ENCODE measurements at regions of chr5 and their contacts with region 1.

Region 1: GRCh38 chr5:81751009-81751835 is at the start of gene SSBP2:
- DNase-seq: peak; percentile 100
- ATAC-seq: peak; percentile 90 to 95 (median 93)
- H3K4me3 ChIP-seq: peak within 1 kb of the TSS; percentile 86
- H3K27ac ChIP-seq: peak within 1 kb of the TSS; percentile 95
- H3K4me1 ChIP-seq: peaks cover 48% of the 10 kb centered on the region
- H3K27me3 ChIP-seq: no peaks in the 10 kb centered on the region
- CTCF ChIP-seq: no peak
- total RNA-seq, gene SSBP2: 25.3 to 42.6 (median 34.6) TPM

Region 2: DNA sequence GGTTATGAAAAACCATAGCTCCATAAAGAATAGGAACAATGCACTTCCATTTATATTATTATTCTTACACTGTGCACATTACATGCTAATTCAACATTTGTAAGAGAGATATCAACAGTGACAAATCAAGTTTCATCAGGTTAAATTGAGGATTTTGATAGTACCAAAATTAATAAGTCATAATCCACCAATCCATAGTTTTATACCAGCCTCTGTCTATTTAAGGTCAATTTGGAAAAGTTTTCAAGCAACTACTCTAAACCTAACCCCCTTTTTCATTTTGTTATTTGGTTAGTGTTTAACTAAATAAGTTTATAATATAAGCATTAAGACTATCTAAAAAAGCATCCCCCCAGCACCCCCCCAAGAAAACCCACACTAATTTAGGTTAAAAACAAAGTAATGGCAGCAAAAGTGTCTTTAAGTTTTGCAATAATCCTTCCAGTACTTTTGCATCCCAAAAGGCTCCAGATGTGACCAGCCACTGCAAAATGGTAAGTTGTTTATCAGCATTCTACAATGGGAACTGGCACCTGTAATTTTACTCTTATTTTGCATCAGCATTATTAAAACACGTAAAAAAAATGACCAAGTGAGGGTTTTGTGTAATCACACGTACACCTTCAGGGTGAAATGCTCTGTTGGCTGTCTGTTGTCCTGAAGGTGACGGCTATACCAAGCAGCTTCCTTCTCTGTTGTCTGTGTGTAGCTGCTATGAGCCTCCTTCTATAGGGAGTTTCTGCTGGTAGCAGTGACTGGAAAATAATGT is 36.4 kb after region 1 on chr5:
- intact Hi-C with region 1: loop called (anchors 1 to 5 kb)
- DNase-seq: peak in 1 of 2 donors; percentile 31
- ATAC-seq: peak; percentile 40 to 75 (median 46)
- H3K4me3 ChIP-seq: peak overlapping the region; percentile 44
- H3K27ac ChIP-seq: no peak overlapping the region
- H3K4me1 ChIP-seq: peaks cover 22% of the 10 kb centered on the region
- H3K27me3 ChIP-seq: no peaks in the 10 kb centered on the region
- CTCF ChIP-seq: no peak

Region 3: DNA sequence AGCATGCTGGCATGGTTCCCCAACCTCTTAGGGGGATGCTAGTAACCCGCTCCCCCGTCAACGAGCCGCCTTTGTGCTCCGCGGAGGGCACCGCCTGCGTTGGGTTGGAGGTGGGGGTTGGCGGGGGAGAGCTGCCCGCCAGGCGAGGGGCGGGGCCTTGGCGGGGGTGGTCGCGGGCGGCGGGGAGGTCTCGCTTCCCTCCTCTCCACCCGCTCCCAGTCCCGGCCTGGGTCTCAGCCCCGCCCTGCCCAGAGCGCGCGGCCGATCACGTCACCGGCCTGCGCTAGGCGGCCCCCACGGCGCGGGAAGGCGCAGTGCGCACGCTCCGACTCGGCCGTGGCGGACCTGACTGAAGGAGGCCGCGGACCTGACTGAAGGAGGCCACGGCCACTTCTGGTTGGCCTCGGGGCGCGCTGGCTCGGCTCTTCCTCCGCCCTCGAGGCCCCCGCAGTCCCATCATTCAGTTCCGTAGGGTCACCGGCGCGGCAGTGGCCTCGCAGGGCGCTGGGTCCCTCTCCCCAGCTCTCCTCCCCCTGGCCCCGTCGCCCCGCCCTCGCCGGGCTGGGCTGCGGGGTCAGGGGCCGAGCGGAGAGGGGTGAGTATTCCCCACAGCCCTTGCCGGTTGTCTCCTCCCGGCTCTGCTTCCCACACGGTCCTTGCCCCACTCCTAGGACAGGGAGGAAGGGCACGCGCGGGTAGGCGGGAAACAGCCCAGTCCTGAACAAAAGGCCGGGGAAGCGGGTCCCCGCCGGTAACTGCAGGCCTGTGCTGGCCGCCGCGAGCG is 220.7 kb after region 1 on chr5 and contains the start of gene ATG10:
- intact Hi-C with region 1: loop called (anchors 2 to 10 kb)
- DNase-seq: peak; percentile 92 to 95
- ATAC-seq: peak; percentile 97 to 99 (median 98)
- H3K4me3 ChIP-seq: peak within 1 kb of the TSS; percentile 80
- H3K27ac ChIP-seq: peak within 1 kb of the TSS; percentile 97
- H3K4me1 ChIP-seq: no peaks in the 10 kb centered on the region
- H3K27me3 ChIP-seq: no peaks in the 10 kb centered on the region
- CTCF ChIP-seq: no peak
- total RNA-seq, gene ATG10: 4.6 to 7.4 (median 6.2) TPM